ENCODE measurements at regions of chr4 and their contacts with region 1.

Region 1: GRCh38 chr4:81405894-81406401 is 65.8 kb downstream of the RASGEF1B start:
- DNase-seq: peak; percentile 68
- ATAC-seq: peak; percentile 84
- H3K4me3 ChIP-seq: no peak overlapping the region
- H3K27ac ChIP-seq: no peak overlapping the region
- H3K4me1 ChIP-seq: no peaks in the 10 kb centered on the region
- H3K27me3 ChIP-seq: peaks cover 26% of the 10 kb centered on the region
- CTCF ChIP-seq: peak; percentile 47 to 98 (median 73)
- POLR2A ChIP-seq: no peak
- RAD21 ChIP-seq: peak; percentile 72

Region 2: GRCh38 chr4:81844717-81845116 is 438.8 kb after region 1 on chr4:
- CTCF ChIA-PET with region 1: no interaction called
- POLR2A ChIA-PET with region 1: no interaction called
- RAD21 ChIA-PET with region 1: no interaction called
- intact Hi-C with region 1: loop called (anchors 1 kb)
- DNase-seq: peak; percentile 48
- ATAC-seq: peak; percentile 95
- H3K4me3 ChIP-seq: no peak overlapping the region
- H3K27ac ChIP-seq: no peak overlapping the region
- H3K4me1 ChIP-seq: no peaks in the 10 kb centered on the region
- H3K27me3 ChIP-seq: peaks cover 13% of the 10 kb centered on the region
- CTCF ChIP-seq: peak; percentile 58 to 83 (median 67); a peak in 4 of 6 replicates
- POLR2A ChIP-seq: no peak
- RAD21 ChIP-seq: peak; percentile 72

Region 3: GRCh38 chr4:82217986-82218715 is 812.2 kb after region 1 on chr4:
- CTCF ChIA-PET with region 1: no interaction called
- POLR2A ChIA-PET with region 1: no interaction called
- RAD21 ChIA-PET with region 1: no interaction called
- intact Hi-C with region 1: loop called (anchors 5 kb)
- DNase-seq: peak; percentile 10
- ATAC-seq: peak; percentile 77
- H3K4me3 ChIP-seq: no peak overlapping the region
- H3K27ac ChIP-seq: no peak overlapping the region
- H3K4me1 ChIP-seq: no peaks in the 10 kb centered on the region
- H3K27me3 ChIP-seq: peaks cover 34% of the 10 kb centered on the region
- CTCF ChIP-seq: peak in 2 of 3 experiments; percentile 57 to 58; a peak in 4 of 6 replicates
- POLR2A ChIP-seq: no peak
- RAD21 ChIP-seq: 0 out of 2 replicates have a peak, but pooled peaks have one; percentile 8

Region 4: DNA sequence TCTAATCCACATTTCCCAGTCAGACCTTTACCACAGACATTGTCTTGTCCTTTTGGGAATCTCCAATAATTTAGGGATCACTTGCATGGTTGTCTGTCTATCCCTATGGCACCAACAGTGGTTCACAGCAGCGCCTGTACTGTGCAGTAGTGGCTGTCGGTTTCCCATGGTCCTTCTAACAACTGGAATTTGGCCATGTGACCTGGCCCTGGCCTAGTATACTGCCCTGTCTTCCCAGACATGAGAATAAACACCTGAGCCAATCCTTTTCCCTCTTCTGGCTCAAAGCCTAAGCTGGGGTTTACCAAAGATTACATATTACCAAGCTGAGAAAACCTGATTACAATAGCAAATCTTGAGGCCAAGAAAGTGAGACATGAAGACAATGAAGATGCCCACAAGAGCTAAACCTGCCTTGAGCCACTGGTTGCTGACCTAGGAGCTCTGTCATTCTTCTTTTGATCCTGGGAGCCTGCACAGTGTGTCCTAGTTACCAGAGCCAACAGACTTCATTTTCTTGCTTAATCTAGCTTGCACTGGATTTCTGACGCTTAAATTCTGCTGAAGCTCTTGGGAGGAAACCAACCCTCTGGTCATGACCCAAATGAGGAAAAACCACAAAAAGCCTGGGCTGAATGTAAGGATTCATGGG is 1300.5 kb after region 1 on chr4:
- CTCF ChIA-PET with region 1: no interaction called
- POLR2A ChIA-PET with region 1: no interaction called
- RAD21 ChIA-PET with region 1: no interaction called
- intact Hi-C with region 1: no loop called
- DNase-seq: no peak
- ATAC-seq: no peak
- H3K4me3 ChIP-seq: no peak overlapping the region
- H3K27ac ChIP-seq: no peak overlapping the region
- H3K4me1 ChIP-seq: no peaks in the 10 kb centered on the region
- H3K27me3 ChIP-seq: no peaks in the 10 kb centered on the region
- CTCF ChIP-seq: no peak
- POLR2A ChIP-seq: no peak
- RAD21 ChIP-seq: no peak

Measured in HCT116 (cell line).